ENCODE measurements at regions of chr5 and their contacts with region 1.

Region 1: GRCh38 chr5:40834849-40835787 is at the start of gene RPL37:
- DNase-seq: peak; percentile 90 to 91
- H3K4me3 ChIP-seq: peak within 1 kb of the TSS; percentile 85 to 100 (median 99)
- H3K27ac ChIP-seq: peak within 1 kb of the TSS; percentile 94
- H3K4me1 ChIP-seq: peaks cover 0 to 7% (median 1%) of the 10 kb centered on the region in 4 experiments; a peak in 2 of 7 replicates
- H3K27me3 ChIP-seq: no peaks in the 10 kb centered on the region
- CTCF ChIP-seq: no peak
- EP300 ChIP-seq: peak in 1 of 2 experiments; percentile 47; a peak in 1 of 3 replicates
- POLR2A ChIP-seq: peak; percentile 97 to 98
- RAD21 ChIP-seq: peak in 1 of 2 experiments; percentile 20; a peak in 1 of 4 replicates
- total RNA-seq, gene RPL37: 1,534 and 1,595 TPM in 2 replicates

Region 2: DNA sequence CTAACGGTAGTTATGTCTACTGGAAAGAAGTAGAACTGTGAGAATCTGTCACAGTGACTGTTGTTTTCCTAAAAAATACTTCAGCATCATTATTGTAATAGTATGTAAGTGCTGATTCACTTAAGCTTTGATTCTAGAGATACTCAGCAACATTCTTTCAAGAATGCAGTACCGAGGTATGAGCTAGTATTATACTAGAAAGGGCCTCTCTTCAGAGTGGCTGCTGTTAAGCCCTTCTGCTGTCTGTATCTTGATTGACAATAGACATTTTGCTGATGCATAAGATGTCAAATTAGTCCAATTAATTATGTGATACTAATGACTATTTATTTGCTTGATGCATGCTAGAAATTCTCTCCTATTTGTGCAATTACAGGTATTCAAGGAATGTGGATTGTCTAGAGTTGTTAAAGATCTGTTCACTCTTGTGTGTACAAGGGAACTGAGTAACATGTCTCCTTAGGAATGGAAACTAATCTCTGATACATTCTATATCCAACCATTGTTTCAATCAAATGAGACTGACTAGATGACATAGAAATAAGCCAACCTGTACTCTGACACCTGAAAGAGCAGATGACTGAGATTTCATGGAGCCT is 247.7 kb before region 1 on chr5:
- CTCF ChIA-PET with region 1: no interaction called
- POLR2A ChIA-PET with region 1: no interaction called
- DNase-seq: no peak
- H3K4me3 ChIP-seq: no peak overlapping the region
- H3K27ac ChIP-seq: no peak overlapping the region
- H3K4me1 ChIP-seq: no peaks in the 10 kb centered on the region
- H3K27me3 ChIP-seq: no peaks in the 10 kb centered on the region
- CTCF ChIP-seq: no peak
- EP300 ChIP-seq: no peak
- POLR2A ChIP-seq: no peak
- RAD21 ChIP-seq: no peak

Region 3: GRCh38 chr5:40780199-40780598 is 54.9 kb before region 1 on chr5:
- CTCF ChIA-PET with region 1: no interaction called
- POLR2A ChIA-PET with region 1: interaction called, 23 read pairs
- DNase-seq: no peak
- H3K4me3 ChIP-seq: no peak overlapping the region
- H3K27ac ChIP-seq: no peak overlapping the region
- H3K4me1 ChIP-seq: no peaks in the 10 kb centered on the region
- H3K27me3 ChIP-seq: no peaks in the 10 kb centered on the region
- CTCF ChIP-seq: no peak
- EP300 ChIP-seq: no peak
- POLR2A ChIP-seq: no peak
- RAD21 ChIP-seq: no peak

Region 4: GRCh38 chr5:40799258-40799657 is 35.9 kb before region 1 on chr5:
- CTCF ChIA-PET with region 1: no interaction called
- POLR2A ChIA-PET with region 1: interaction called, 86 read pairs
- DNase-seq: no peak
- H3K4me3 ChIP-seq: peak overlapping the region in 3 of 4 experiments; percentile 65 to 96 (median 93); a peak in 5 of 8 replicates
- H3K27ac ChIP-seq: no peak overlapping the region
- H3K4me1 ChIP-seq: peaks cover 0 to 5% (median 0%) of the 10 kb centered on the region in 4 experiments; a peak in 2 of 7 replicates
- H3K27me3 ChIP-seq: no peaks in the 10 kb centered on the region
- CTCF ChIP-seq: no peak
- EP300 ChIP-seq: no peak
- POLR2A ChIP-seq: no peak
- RAD21 ChIP-seq: no peak

Region 5: DNA sequence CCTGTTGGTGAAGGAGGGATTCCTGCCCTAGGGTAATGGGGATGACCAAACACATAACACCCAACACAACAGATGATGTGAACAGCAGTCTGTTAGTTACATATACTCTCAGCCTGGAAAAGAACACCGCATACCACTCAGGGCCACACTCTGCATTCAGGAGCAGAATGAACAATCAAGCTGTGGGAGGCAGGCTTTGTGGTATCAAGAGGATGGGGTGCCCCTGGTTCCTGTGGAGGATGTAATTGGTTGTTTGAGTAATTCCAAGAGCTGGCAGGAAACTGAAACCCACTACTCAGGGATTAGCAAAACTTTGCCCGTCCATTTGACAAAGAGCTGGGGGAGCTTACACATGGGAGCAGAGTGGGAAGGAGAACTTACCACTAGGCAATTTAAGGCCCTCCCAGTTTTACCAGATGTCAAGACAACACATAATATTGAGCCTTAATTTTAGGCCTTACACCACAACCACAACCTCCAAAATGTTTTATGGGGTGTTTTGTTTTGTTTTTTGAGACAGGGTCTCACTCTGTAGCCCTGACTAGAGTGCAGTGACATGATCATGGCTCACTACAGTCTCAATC is 21.3 kb before region 1 on chr5:
- CTCF ChIA-PET with region 1: interaction called, 4 read pairs
- POLR2A ChIA-PET with region 1: interaction called, 372 read pairs
- DNase-seq: no peak
- H3K4me3 ChIP-seq: no peak overlapping the region
- H3K27ac ChIP-seq: no peak overlapping the region
- H3K4me1 ChIP-seq: peaks cover 0 to 6% (median 2%) of the 10 kb centered on the region in 4 experiments; a peak in 2 of 7 replicates
- H3K27me3 ChIP-seq: no peaks in the 10 kb centered on the region
- CTCF ChIP-seq: no peak
- EP300 ChIP-seq: no peak
- POLR2A ChIP-seq: no peak
- RAD21 ChIP-seq: no peak

Region 6: DNA sequence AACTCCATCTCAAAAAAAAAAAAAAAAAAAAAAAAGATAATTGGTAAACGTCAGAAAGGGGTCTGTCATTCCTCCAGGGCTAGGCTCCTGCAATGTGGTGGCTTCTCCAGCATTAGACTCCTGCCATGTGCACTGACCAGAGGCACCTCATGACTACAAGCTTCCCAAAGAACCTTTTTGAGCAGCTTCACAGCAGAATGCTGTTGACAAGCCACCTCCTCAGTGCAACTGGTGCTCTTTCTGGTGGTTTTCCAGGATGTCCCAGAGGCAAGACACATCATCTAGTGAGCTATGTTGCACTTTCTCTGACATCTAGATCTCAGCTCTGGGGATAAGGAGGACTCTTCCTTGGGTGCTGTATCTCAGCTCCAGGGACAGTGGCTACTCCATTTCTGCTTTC is 11.7 kb before region 1 on chr5:
- CTCF ChIA-PET with region 1: interaction called, 4 read pairs
- POLR2A ChIA-PET with region 1: interaction called, 372 read pairs
- DNase-seq: no peak
- H3K4me3 ChIP-seq: no peak overlapping the region
- H3K27ac ChIP-seq: no peak overlapping the region
- H3K4me1 ChIP-seq: no peaks in the 10 kb centered on the region
- H3K27me3 ChIP-seq: no peaks in the 10 kb centered on the region
- CTCF ChIP-seq: no peak
- EP300 ChIP-seq: no peak
- POLR2A ChIP-seq: no peak
- RAD21 ChIP-seq: no peak

Region 7: DNA sequence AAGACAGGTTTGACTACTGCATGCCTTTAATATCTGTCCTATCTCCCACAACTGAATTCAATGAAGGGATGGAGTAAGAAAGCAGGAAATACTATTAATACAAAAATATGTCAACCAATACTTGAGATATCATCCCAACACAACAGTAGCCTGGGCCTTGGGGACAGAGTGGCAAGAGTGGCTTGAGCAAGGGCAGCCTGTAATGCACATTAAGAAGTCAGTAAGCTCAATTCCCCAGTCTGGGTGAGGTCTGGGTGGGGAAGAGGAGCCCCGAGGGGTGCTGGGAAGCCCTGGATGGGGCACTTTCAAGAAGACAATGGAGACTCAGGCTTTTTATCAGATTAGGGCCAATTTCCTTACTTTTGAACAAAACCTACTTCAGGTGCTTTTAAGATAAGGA is 31.2 kb after region 1 on chr5:
- CTCF ChIA-PET with region 1: interaction called, 3 read pairs
- POLR2A ChIA-PET with region 1: interaction called, 16 read pairs
- DNase-seq: no peak
- H3K4me3 ChIP-seq: no peak overlapping the region
- H3K27ac ChIP-seq: no peak overlapping the region
- H3K4me1 ChIP-seq: peaks cover 0 to 3% (median 0%) of the 10 kb centered on the region in 4 experiments; a peak in 5 of 7 replicates
- H3K27me3 ChIP-seq: no peaks in the 10 kb centered on the region
- CTCF ChIP-seq: no peak
- EP300 ChIP-seq: no peak
- POLR2A ChIP-seq: no peak
- RAD21 ChIP-seq: no peak

Region 8: DNA sequence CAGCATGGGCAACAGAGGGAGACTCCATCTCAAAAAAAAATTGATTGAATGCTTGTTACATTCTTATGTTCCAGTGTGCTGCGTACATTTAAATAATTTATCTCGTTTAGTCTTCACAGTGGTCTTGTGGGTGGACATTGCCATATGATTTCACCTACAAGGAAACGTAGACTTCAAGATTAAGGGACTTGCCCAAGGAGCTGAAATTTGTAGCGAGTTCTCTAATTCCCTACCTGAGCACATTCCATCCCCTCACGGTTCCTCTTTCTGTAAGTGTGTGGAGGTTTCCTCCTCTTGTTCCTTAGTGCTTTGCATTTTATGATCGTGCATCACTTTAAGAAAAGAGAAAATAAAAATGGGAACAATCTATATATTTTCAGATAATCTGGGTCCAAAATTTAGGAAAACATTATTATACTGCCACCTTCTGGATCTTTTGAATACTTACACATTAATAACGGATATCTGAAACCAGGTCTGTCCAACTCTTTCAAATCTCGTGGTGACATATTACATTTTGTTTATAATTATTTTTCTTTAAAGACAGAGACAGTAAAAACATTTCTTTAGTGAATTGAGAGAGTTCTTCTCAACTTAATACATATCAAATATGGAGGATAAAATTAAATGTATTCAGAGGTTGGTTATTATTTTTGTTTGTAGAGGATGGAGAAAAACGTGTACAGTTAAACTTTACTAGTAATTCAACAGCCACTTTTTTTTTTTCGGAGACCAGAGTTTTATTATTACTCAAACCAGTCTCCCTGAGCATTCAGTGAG is 44.2 kb after region 1 on chr5:
- CTCF ChIA-PET with region 1: interaction called, 10 read pairs
- POLR2A ChIA-PET with region 1: interaction called, 7 read pairs
- DNase-seq: no peak
- H3K4me3 ChIP-seq: no peak overlapping the region
- H3K27ac ChIP-seq: no peak overlapping the region
- H3K4me1 ChIP-seq: no peaks in the 10 kb centered on the region
- H3K27me3 ChIP-seq: no peaks in the 10 kb centered on the region
- CTCF ChIP-seq: peak in 2 of 3 experiments; percentile 2 to 16; a peak in 2 of 4 replicates
- EP300 ChIP-seq: no peak
- POLR2A ChIP-seq: no peak
- RAD21 ChIP-seq: peak in 1 of 2 experiments; percentile 48; a peak in 3 of 4 replicates

Measured in H1 (cell line).